Left cardiac atrium (tissue), 4 donors: ENCODE measurements at regions of chr7 and their contacts with region 1.

Region 1: DNA sequence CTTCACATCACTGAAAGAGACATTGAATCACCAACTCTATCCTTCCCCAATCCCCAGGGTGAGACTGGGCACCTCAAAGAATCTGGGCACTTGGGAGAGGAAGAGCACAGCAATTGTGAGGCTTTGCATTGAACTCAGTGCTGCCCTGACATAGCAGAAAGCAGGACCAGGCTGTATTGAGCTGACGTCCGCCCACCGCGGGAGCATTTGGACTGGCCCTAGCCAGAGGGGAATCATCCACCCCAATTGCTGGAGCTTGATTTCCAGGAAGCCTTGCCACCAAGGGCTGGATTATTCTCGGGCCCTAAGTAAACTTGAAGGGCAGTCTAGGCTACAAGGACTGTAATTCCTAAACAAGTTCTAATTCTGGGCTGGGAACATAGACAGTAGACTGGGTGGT is 416.3 kb upstream of the PHF14 start:
- DNase-seq: no peak
- ATAC-seq: no peak

Region 2: GRCh38 chr7:10618933-10619332 is 61.6 kb after region 1 on chr7:
- intact Hi-C with region 1: loop called in 1 of 2 experiments (anchors 10 kb)
- DNase-seq: no peak
- ATAC-seq: no peak

Region 3: DNA sequence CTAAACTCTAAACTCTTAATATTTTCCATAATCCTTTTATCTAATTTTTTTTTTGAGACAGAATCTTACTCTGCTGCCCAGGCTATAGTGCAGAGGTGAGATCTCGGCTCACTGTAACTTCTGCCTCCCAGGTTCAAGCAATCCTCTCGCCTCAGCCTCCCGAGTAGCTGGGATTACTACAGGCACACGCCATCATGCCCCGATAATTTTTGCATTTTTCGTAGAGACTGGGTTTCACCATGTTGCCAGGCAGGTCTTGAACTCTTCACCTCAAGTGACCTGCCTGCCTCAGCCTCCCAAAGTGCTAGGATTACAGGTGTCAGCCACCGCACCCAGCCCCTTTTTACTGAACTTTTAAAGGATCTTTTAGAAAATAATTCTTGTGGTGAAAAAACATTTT is 306.1 kb after region 1 on chr7:
- intact Hi-C with region 1: no loop called
- DNase-seq: no peak
- ATAC-seq: no peak